ENCODE measurements at regions of chr19 and their contacts with region 1.

Region 1: DNA sequence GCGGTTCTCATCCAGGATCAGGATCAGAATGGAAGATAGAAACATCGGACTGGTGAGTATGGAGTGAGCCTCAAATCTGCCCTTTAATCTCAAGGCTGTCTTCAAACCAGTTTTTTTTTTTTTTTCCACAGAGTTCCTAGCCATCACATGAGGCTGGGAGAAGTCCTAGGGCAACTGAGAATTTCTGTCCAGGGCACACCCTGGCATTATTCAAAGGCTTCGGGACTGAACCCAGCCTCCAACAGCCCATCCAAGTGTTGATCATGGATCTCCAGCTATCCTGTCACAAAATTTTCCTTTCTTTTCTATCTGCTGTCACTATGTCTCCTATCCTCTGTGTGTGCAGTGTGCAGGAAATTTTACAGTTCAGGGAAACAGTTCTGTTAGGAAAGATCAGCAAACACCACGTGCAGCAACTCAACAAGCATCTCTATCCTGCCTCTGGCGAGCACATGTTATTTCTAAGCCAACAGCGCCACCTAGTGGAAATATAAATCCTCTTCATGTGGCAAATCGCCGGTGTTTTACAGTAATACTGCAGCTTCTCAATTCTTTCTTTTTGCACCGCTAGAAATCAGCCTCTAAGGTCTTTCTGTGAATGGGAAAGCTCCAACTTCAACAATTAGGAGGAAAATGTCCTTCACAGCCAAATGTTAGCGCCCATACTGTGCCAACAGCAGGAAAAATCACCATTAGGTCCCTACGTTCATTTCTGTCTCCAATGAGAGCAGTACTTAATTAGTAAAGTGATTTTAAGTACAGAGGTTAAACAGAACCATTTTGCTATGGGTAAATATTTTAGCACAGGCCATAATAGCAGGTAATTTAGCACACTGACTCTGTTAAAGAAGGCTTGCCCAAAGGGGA is 21.4 kb upstream of the ZNF181 start:
- DNase-seq: peak; percentile 77
- H3K4me3 ChIP-seq: no peak overlapping the region
- H3K27ac ChIP-seq: no peak overlapping the region
- H3K4me1 ChIP-seq: no peaks in the 10 kb centered on the region
- H3K27me3 ChIP-seq: no peaks in the 10 kb centered on the region
- CTCF ChIP-seq: peak; percentile 52 to 97 (median 84)
- POLR2A ChIP-seq: no peak

Region 2: GRCh38 chr19:34501339-34502320 is 211.0 kb before region 1 on chr19:
- intact Hi-C with region 1: loop called (anchors 5 kb)
- DNase-seq: peak; percentile 86
- H3K4me3 ChIP-seq: no peak overlapping the region
- H3K27ac ChIP-seq: no peak overlapping the region
- H3K4me1 ChIP-seq: no peaks in the 10 kb centered on the region
- H3K27me3 ChIP-seq: no peaks in the 10 kb centered on the region
- CTCF ChIP-seq: peak; percentile 92 to 99 (median 98)
- POLR2A ChIP-seq: no peak

Region 3: DNA sequence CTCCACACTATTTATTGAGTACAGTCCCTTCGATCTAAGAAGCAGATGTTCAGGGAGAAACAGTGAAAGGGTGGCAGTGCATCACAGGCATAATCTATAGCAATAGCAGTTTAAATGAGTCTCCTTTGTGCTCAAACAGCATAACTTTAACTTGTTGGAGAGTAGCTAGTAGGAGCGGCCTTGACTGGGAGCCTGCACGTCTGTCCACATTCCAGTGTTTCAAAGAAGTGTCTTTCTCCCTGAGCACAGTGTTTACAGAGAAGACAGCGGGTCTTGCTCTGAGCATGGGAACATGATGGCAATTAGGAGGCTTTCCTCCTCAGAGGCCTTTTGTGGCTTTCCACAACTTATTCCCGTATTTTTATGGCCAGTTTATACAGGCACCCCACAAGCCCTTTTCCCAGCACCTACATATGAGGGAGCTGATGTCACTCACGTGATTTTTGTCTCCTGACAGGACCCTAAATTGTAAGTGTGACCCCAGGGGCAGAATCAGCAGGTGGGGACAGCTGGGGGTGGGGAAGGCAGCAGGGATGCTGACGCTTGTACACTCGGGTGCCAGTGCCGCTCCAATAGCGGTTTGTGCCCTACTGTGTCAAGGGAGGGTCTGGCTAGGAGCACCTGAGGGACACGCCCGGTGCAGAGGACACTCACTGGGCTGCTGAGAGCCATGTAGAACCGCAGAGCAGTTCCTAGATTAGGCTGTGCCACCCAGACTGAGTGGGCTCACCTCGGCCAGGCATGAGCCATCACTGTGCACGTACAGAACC is 117.1 kb before region 1 on chr19:
- intact Hi-C with region 1: no loop called
- DNase-seq: no peak
- H3K4me3 ChIP-seq: no peak overlapping the region
- H3K27ac ChIP-seq: no peak overlapping the region
- H3K4me1 ChIP-seq: peaks cover 5% of the 10 kb centered on the region
- H3K27me3 ChIP-seq: no peaks in the 10 kb centered on the region
- CTCF ChIP-seq: no peak
- POLR2A ChIP-seq: no peak

Region 4: DNA sequence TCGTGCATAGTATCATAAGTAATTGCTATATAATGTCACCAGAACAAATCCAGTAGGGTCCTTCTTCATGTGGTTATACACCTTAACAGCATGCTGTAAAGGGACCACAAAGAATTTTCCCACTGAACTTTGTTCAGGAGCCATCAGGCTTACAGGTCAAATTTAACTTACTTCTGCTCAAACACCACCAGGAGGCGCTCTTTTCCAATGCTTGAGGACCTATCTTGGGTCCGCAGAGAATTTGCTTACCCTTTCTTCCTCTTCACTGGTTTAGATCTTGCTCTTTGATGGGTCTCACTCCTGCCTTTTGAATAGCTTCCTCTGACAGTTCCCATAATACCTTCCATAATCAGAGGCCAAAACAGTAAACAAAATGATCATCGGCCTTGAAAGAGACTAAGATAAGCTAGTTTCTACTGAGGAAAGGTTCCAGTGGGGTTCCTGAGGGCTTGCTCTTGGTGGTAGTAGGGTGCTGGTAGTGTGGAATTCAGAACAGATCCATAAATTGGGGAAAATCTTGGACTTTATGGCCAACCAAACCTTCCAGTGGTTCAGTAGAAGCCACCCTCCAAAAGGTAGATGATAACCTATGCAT is 73.0 kb before region 1 on chr19:
- intact Hi-C with region 1: loop called (anchors 2 kb)
- DNase-seq: peak; percentile 46
- H3K4me3 ChIP-seq: no peak overlapping the region
- H3K27ac ChIP-seq: no peak overlapping the region
- H3K4me1 ChIP-seq: no peaks in the 10 kb centered on the region
- H3K27me3 ChIP-seq: no peaks in the 10 kb centered on the region
- CTCF ChIP-seq: peak; percentile 55 to 81 (median 69)
- POLR2A ChIP-seq: no peak

Region 5: DNA sequence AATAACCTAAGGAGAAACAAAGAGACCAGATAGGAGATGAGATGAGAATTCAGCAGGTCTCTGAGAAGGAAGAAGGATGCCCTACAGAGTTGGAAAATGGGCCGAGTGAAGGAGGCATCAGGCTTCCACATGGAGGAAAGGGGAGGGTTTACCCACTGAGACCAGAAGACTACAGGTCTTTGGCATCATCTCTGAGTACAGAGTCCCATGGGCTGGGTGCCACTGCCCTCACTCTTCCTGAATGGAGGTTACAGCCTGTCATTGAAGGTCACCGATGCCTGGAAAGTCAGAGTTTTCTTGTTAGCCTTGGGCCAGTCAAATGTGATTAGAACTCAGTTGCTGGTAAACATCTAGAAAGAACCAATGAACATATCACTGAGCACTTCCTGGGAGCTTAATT is 25.3 kb before region 1 on chr19:
- intact Hi-C with region 1: no loop called
- DNase-seq: no peak
- H3K4me3 ChIP-seq: no peak overlapping the region
- H3K27ac ChIP-seq: no peak overlapping the region
- H3K4me1 ChIP-seq: no peaks in the 10 kb centered on the region
- H3K27me3 ChIP-seq: no peaks in the 10 kb centered on the region
- CTCF ChIP-seq: no peak
- POLR2A ChIP-seq: no peak